ENCODE measurements at regions of chr1 and their contacts with region 1.

Region 1: GRCh38 chr1:85276215-85276977 is at the start of gene BCL10:
- DNase-seq: peak; percentile 99
- ATAC-seq: peak; percentile 92
- H3K4me3 ChIP-seq: peak within 1 kb of the TSS; percentile 87 to 99 (median 98)
- H3K4me3 Mint-ChIP-seq: peak within 1 kb of the TSS; percentile 96
- H3K27ac ChIP-seq: peak within 1 kb of the TSS; percentile 99
- H3K27ac Mint-ChIP-seq: peak within 1 kb of the TSS; percentile 97
- H3K4me1 ChIP-seq: peaks cover 38 to 47% of the 10 kb centered on the region in 2 donors
- H3K4me1 Mint-ChIP-seq: peaks cover 55% of the 10 kb centered on the region
- H3K27me3 ChIP-seq: no peaks in the 10 kb centered on the region
- H3K27me3 Mint-ChIP-seq: no peaks in the 10 kb centered on the region
- CTCF ChIP-seq: no peak
- total RNA-seq, gene BCL10: 60.5 and 64.4 TPM in 2 replicates

Region 2: GRCh38 chr1:84573967-84574842 is 702.2 kb before region 1 on chr1 and contains the start of gene CTBS:
- CTCF ChIA-PET with region 1: no interaction called
- POLR2A ChIA-PET with region 1: interaction called, 5 read pairs
- intact Hi-C with region 1: loop called (anchors 1 kb)
- DNase-seq: peak; percentile 93
- ATAC-seq: peak; percentile 95
- H3K4me3 ChIP-seq: peak within 1 kb of the TSS; percentile 59 to 94 (median 73)
- H3K4me3 Mint-ChIP-seq: peak within 1 kb of the TSS; percentile 100
- H3K27ac ChIP-seq: peak within 1 kb of the TSS; percentile 96 to 99
- H3K27ac Mint-ChIP-seq: peak within 1 kb of the TSS; percentile 100
- H3K4me1 ChIP-seq: peaks cover 26% of the 10 kb centered on the region in 2 donors
- H3K4me1 Mint-ChIP-seq: peaks cover 43% of the 10 kb centered on the region
- H3K27me3 ChIP-seq: no peaks in the 10 kb centered on the region
- H3K27me3 Mint-ChIP-seq: no peaks in the 10 kb centered on the region
- CTCF ChIP-seq: no peak
- total RNA-seq, gene CTBS: 19.1 and 19.9 TPM in 2 replicates

Region 3: DNA sequence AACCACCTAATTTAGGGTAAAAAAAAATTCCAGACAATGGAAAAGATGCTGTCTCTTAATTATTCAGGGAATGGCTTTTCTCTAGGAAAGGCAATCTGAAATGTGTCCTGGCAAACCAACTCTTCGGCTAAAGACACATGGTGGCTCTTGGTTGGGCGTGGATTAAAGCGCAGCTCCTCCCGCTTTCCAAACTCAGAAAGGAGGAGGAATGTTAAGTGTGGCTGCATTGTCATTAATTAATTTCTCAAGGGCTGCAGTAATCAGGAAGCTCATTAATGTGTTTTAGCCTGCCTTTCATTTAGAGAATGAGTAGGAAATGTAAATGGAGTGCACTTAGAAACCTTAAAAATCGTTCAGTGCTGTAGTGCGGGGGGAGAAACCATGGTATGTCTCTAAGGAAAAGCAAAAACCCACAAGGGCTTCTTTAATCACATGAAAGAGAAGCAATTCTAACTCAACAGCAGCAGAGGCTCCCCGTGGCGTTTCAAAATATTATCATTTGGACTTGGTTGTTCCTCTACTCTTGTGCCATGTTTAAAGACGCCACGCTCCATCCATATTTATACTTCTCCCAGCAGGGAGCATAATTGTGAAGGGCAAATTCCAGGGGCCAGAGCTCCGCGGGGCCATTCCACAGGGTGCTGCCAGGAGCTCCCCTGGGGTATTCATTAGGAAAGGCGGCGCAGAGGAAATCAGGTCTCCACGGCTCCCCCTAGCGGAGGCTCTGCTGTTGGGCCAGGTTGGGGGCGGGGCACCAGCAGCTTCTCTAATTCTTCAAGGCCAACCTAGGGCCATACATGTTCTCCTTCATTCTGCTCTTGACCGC is 494.2 kb before region 1 on chr1:
- CTCF ChIA-PET with region 1: no interaction called
- POLR2A ChIA-PET with region 1: no interaction called
- intact Hi-C with region 1: no loop called
- DNase-seq: peak; percentile 69
- ATAC-seq: peak; percentile 87
- H3K4me3 ChIP-seq: no peak overlapping the region
- H3K4me3 Mint-ChIP-seq: no peak overlapping the region
- H3K27ac ChIP-seq: no peak overlapping the region
- H3K27ac Mint-ChIP-seq: no peak overlapping the region
- H3K4me1 ChIP-seq: peaks cover 0 to 3% of the 10 kb centered on the region in 2 donors
- H3K4me1 Mint-ChIP-seq: peaks cover 3% of the 10 kb centered on the region
- H3K27me3 ChIP-seq: no peaks in the 10 kb centered on the region
- H3K27me3 Mint-ChIP-seq: peaks cover 20% of the 10 kb centered on the region
- CTCF ChIP-seq: peak; percentile 81

Region 4: GRCh38 chr1:84988588-84988987 is 287.8 kb before region 1 on chr1:
- CTCF ChIA-PET with region 1: no interaction called
- POLR2A ChIA-PET with region 1: no interaction called
- intact Hi-C with region 1: loop called (anchors 2 kb)
- DNase-seq: peak; percentile 34
- ATAC-seq: peak; percentile 56
- H3K4me3 ChIP-seq: no peak overlapping the region
- H3K4me3 Mint-ChIP-seq: peak overlapping the region; percentile 8
- H3K27ac ChIP-seq: no peak overlapping the region
- H3K27ac Mint-ChIP-seq: peak overlapping the region; percentile 3
- H3K4me1 ChIP-seq: peaks cover 33 to 48% of the 10 kb centered on the region in 2 donors
- H3K4me1 Mint-ChIP-seq: peaks cover 57% of the 10 kb centered on the region
- H3K27me3 ChIP-seq: no peaks in the 10 kb centered on the region
- H3K27me3 Mint-ChIP-seq: no peaks in the 10 kb centered on the region
- CTCF ChIP-seq: no peak

Region 5: GRCh38 chr1:85200870-85201339 is 75.5 kb before region 1 on chr1 and contains the start of gene SYDE2:
- CTCF ChIA-PET with region 1: interaction called, 5 read pairs
- POLR2A ChIA-PET with region 1: interaction called, 7 read pairs
- intact Hi-C with region 1: loop called (anchors 1 kb)
- DNase-seq: peak; percentile 86
- ATAC-seq: peak; percentile 83
- H3K4me3 ChIP-seq: peak within 1 kb of the TSS; percentile 46 to 73 (median 62)
- H3K4me3 Mint-ChIP-seq: peak within 1 kb of the TSS; percentile 98
- H3K27ac ChIP-seq: peak within 1 kb of the TSS in 1 of 2 donors; percentile 85
- H3K27ac Mint-ChIP-seq: peak within 1 kb of the TSS; percentile 93
- H3K4me1 ChIP-seq: peaks cover 16 to 26% of the 10 kb centered on the region in 2 donors
- H3K4me1 Mint-ChIP-seq: peaks cover 15% of the 10 kb centered on the region
- H3K27me3 ChIP-seq: peaks cover 0 to 35% (median 25%) of the 10 kb centered on the region in 4 experiments
- H3K27me3 Mint-ChIP-seq: peaks cover 42% of the 10 kb centered on the region
- CTCF ChIP-seq: no peak
- total RNA-seq, gene SYDE2: 0.89 and 1.0 TPM in 2 replicates

Region 6: GRCh38 chr1:85297855-85298629 is 21.6 kb after region 1 on chr1:
- CTCF ChIA-PET with region 1: interaction called, 12 read pairs
- POLR2A ChIA-PET with region 1: interaction called, 9 read pairs
- intact Hi-C with region 1: loop called (anchors 1 kb)
- DNase-seq: peak; percentile 66
- ATAC-seq: peak; percentile 90
- H3K4me3 ChIP-seq: peak overlapping the region in 3 of 5 experiments; percentile 6 to 51 (median 17)
- H3K4me3 Mint-ChIP-seq: peak overlapping the region; percentile 76
- H3K27ac ChIP-seq: peak overlapping the region; percentile 50 to 60
- H3K27ac Mint-ChIP-seq: peak overlapping the region; percentile 78
- H3K4me1 ChIP-seq: peaks cover 19 to 20% of the 10 kb centered on the region in 2 donors
- H3K4me1 Mint-ChIP-seq: peaks cover 26% of the 10 kb centered on the region
- H3K27me3 ChIP-seq: no peaks in the 10 kb centered on the region
- H3K27me3 Mint-ChIP-seq: no peaks in the 10 kb centered on the region
- CTCF ChIP-seq: no peak

Region 7: DNA sequence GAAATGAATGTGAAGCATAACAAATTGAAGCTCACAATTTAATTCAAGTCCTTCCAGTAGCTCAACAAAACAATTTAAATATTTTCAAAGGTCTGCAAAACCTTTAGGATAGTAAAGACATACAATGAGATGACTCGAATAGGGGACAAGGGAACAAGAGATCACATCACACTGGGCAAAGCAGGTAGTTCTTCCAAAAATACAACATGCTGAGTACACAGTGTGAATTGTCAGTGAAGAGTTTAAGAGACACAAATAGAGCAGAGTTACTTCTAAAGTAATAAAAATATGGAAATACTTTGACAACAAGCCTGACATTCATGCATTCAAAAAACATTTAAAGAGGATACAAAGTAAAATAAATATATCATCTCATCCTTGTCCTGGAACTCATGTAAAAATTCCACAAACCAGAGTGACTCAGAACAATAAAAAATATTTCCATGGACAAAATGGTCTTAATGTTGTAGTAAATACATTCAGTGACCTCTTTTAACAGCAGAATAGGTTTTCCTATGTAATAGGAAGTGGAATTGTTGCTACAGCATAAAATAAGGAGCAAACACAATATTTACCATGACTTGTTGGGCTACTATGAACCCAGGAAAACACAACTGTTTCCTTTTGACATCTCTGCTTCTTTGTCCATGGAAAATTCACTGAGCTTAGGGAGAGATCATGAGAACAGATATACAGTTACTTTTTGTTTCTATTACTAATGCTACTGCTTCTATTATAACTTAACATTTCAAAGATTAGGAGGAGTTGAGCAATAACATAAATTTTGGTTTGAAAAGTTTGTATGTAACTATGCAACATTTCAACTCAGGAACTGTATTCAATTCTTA is 83.7 kb after region 1 on chr1:
- CTCF ChIA-PET with region 1: no interaction called
- POLR2A ChIA-PET with region 1: no interaction called
- intact Hi-C with region 1: no loop called
- DNase-seq: no peak
- ATAC-seq: no peak
- H3K4me3 ChIP-seq: no peak overlapping the region
- H3K4me3 Mint-ChIP-seq: no peak overlapping the region
- H3K27ac ChIP-seq: no peak overlapping the region
- H3K27ac Mint-ChIP-seq: no peak overlapping the region
- H3K4me1 ChIP-seq: no peaks in the 10 kb centered on the region
- H3K4me1 Mint-ChIP-seq: no peaks in the 10 kb centered on the region
- H3K27me3 ChIP-seq: no peaks in the 10 kb centered on the region
- H3K27me3 Mint-ChIP-seq: no peaks in the 10 kb centered on the region
- CTCF ChIP-seq: no peak

Region 8: GRCh38 chr1:85450832-85451231 is 174.4 kb after region 1 on chr1:
- CTCF ChIA-PET with region 1: no interaction called
- POLR2A ChIA-PET with region 1: no interaction called
- intact Hi-C with region 1: no loop called
- DNase-seq: no peak
- ATAC-seq: no peak
- H3K4me3 ChIP-seq: no peak overlapping the region
- H3K4me3 Mint-ChIP-seq: no peak overlapping the region
- H3K27ac ChIP-seq: no peak overlapping the region
- H3K27ac Mint-ChIP-seq: no peak overlapping the region
- H3K4me1 ChIP-seq: no peaks in the 10 kb centered on the region
- H3K4me1 Mint-ChIP-seq: no peaks in the 10 kb centered on the region
- H3K27me3 ChIP-seq: no peaks in the 10 kb centered on the region
- H3K27me3 Mint-ChIP-seq: no peaks in the 10 kb centered on the region
- CTCF ChIP-seq: no peak

Region 9: DNA sequence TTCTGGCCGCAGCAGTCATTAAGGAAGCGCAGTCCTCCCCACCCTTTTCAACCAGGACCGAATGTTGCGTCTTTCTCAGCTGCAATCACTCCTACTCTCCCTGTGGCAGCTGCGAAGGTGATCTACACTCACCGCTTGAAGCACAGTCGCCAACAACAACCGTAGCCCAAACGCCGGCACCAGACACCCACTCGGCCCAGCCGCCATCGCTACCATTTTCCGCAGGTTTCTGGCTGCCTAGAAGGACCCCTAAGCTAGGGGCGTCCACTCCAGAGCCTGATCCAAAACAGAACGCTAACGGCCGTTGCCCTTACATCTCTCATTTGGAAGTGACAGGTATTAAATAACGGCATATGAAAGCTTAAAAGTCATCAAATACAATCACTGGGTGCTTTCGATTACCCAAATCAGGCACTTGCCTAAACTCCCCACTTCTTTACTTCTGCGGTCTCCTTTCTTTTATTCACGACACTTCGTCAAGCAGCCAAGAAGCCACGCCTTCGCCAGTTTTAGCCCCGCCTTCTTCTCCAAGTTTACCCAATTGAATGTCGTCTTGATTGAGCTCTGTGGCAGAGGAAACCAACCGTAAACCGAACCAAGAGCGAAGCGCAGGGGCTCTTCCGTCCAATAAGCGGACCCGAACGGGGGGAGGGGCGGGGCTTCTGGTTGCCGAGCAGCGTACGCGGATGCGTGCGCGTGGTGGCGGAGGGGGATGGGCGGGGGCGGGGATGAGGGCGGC is 1637.7 kb after region 1 on chr1 and contains the start of gene SELENOF:
- CTCF ChIA-PET with region 1: no interaction called
- POLR2A ChIA-PET with region 1: no interaction called
- intact Hi-C with region 1: loop called (anchors 5 kb)
- DNase-seq: peak; percentile 100
- ATAC-seq: peak; percentile 87
- H3K4me3 ChIP-seq: peak within 1 kb of the TSS; percentile 91 to 100 (median 94)
- H3K4me3 Mint-ChIP-seq: no peak within 1 kb of the TSS
- H3K27ac ChIP-seq: peak within 1 kb of the TSS; percentile 94 to 97
- H3K27ac Mint-ChIP-seq: no peak within 1 kb of the TSS
- H3K4me1 ChIP-seq: peaks cover 31 to 34% of the 10 kb centered on the region in 2 donors
- H3K4me1 Mint-ChIP-seq: peaks cover 48% of the 10 kb centered on the region
- H3K27me3 ChIP-seq: no peaks in the 10 kb centered on the region
- H3K27me3 Mint-ChIP-seq: no peaks in the 10 kb centered on the region
- CTCF ChIP-seq: no peak
- total RNA-seq, gene SELENOF: 178 and 185 TPM in 2 replicates